Activated T-helper 1 cell treated with anti-CD3 and anti-CD28 coated beads, Interleukin-12 subunit alpha, Interleukin-12 subunit beta, Interleukin-2, Interleukin-4 antibody, amounts not matched to agents 30 ng/mL and 10 ng/mL and 1 ng/mL, durations not matched to agents 14 hours and 24 hours and 36 hours (primary cell): ENCODE measurements at regions of chr20 and their contacts with region 1.

Region 1: GRCh38 chr20:3911956-3912355 is 22.8 kb downstream of the PANK2 start:
- DNase-seq: no peak
- H3K4me3 Mint-ChIP-seq: no peak overlapping the region
- H3K27ac Mint-ChIP-seq: no peak overlapping the region
- H3K4me1 Mint-ChIP-seq: peaks cover 56% of the 10 kb centered on the region
- H3K27me3 Mint-ChIP-seq: no peaks in the 10 kb centered on the region

Region 2: DNA sequence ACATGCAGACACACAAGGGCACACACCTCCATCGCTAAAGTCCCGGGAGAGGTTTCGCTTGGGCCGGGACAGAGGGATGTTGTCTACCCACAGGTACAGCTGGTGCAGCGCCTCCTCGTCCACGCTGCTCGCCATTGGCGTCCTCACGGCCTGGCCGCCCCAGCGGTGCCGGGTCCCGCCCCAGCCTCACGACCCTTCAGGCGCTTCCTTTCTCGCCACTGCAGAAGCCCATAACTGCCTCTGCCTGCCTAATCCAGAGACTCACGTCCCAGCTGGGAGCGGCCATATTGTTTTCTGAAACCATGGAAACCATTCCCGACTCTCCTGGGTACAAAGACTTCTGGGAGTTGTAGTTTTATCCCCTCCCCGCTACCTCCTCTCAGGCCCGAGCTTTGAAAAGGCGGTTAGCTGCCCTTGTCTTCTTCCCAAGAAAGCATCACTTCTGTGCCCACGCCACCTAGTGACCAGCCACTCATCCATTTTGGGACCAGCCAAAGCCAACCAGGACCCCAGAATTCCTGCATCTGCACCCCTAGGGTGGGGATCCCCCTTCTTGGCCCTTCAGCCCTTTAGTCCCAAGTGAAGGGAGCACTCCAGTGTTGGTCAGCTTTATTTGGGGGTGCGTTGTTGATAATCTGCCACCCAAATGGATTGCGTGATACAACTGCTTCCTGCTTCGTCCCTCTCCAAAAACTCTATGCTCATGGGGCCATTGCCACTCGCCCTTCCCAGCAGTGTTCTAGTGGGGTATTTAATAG is 130.6 kb before region 1 on chr20 and contains the start of gene SPEF1:
- intact Hi-C with region 1: loop called (anchors 5 kb)
- DNase-seq: no peak
- H3K4me3 Mint-ChIP-seq: peak within 1 kb of the TSS; percentile 64
- H3K27ac Mint-ChIP-seq: no peak within 1 kb of the TSS
- H3K4me1 Mint-ChIP-seq: peaks cover 43% of the 10 kb centered on the region
- H3K27me3 Mint-ChIP-seq: peaks cover 24% of the 10 kb centered on the region
- total RNA-seq, gene SPEF1: 0.12 TPM in 1 of 2 replicates, not detected in the other

Region 3: DNA sequence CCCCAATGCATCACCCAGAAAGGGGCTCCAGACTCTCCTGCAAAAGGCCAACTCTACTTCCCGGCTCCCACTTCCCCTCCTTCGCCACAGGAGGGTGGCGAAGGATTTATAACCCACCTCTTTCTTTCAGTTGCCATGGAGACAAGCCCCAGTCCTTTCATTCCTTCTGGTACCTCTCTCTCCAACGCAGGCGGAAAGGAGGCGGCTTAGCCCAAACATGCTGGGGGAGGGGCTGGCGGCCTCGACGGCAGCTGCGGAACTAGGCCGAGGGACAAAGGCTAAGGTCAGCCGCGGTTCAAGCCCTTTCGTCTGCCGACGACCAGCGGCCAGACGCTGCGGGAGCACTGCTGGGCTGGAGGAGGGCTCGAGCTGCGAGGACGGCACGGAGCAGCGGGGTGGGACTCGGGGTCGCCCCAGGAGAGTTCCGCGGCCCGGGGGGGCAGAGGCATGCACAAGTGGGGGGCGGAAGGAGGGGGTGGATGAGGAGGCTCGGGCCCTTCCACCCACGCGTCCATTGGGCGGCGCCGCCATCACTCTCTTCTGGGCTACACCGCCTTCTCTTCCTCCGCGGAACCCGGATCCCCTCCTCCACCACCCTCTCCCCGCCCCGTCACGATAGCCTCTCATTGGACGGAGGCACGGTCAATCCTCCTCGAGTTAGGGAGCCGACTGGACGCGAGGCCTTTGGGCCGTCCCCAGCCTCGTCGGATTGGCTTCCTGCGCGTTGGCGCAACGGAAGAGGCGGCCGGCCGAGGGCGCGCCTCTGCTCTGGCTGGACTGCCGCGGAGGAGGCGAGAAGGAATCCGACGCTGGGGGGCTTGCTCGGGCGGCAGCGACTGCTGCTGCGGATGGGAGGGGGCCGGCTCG is 23.1 kb before region 1 on chr20 and contains the start of gene PANK2:
- intact Hi-C with region 1: loop called (anchors 1 kb)
- DNase-seq: peak; percentile 98
- H3K4me3 Mint-ChIP-seq: peak within 1 kb of the TSS; percentile 100
- H3K27ac Mint-ChIP-seq: peak within 1 kb of the TSS; percentile 98
- H3K4me1 Mint-ChIP-seq: peaks cover 44% of the 10 kb centered on the region
- H3K27me3 Mint-ChIP-seq: no peaks in the 10 kb centered on the region
- total RNA-seq, gene PANK2: 51.4 and 54.6 TPM in 2 replicates

Region 4: DNA sequence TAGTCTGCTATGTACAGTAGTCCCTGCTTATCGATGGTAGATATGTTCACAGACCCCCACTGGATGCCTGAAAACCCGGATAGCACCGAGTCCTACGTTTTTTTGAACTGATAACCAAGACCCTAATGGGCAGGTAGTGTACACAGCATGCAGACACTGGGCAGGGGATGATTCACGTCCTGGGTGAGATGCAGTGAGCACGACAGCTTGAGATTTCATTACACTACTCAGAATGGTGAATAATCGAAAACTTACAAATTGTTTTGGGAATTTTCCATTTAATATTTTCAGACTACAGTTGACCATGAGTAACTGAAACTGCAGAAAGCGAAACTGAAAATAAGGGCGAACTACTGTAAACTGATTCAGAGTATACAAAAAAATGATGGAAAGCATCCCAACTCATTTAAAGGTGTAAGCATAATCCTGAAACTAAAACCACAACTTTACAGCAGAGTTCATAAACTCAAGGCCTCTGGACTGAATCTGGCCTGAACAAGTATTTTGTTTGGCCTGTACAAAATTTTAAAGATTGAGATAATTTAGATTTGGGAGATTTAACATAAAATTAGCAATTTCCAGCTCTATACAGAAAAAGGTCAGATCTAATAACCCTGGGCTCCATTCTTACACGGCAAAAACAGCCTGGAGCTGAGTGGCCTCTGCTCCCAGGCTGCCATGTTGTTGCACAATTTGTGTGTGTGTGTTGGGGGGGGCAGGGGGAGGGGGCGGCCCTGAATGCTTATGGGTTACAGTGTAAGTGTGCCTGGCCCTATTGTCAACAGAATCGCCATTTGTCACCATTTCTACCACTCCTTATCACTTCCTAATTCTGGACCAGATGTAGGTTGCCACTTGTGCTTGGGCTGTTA is 68.5 kb after region 1 on chr20:
- intact Hi-C with region 1: loop called (anchors 2 kb)
- DNase-seq: no peak
- H3K4me3 Mint-ChIP-seq: peak overlapping the region; percentile 78
- H3K27ac Mint-ChIP-seq: peak overlapping the region; percentile 91
- H3K4me1 Mint-ChIP-seq: peaks cover 22% of the 10 kb centered on the region
- H3K27me3 Mint-ChIP-seq: no peaks in the 10 kb centered on the region

Region 5: GRCh38 chr20:4014031-4014474 is 102.1 kb after region 1 on chr20:
- intact Hi-C with region 1: loop called (anchors 5 kb)
- DNase-seq: no peak
- H3K4me3 Mint-ChIP-seq: peak overlapping the region; percentile 87
- H3K27ac Mint-ChIP-seq: peak overlapping the region; percentile 78
- H3K4me1 Mint-ChIP-seq: peaks cover 57% of the 10 kb centered on the region
- H3K27me3 Mint-ChIP-seq: peaks cover 4% of the 10 kb centered on the region